Mucosa of descending colon (tissue), 3 donors: ENCODE measurements at regions of chr5 and their contacts with region 1.

Region 1: DNA sequence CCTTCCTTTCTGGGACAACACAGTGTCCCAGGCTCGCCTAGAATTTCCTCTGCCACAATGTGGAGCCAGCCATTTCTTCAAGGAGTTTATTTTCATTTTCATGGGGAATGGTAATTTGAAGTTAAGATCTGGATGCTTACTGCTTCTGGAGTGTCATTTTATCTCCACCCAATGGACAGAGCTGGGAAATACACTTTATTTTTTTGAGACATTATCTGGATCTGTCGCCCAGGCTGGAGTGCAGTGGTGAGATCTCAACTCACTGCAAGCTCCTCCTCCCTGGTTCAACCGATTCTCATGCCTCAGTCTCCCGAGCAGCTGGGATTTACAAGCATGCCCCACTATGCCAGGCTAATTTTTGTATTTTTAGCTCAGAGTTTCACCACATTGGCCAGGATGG is 12.7 kb upstream of the THG1L start:
- DNase-seq: peak in 2 of 3 donors; percentile 36 to 47
- ATAC-seq: peak; percentile 95
- H3K4me3 ChIP-seq: no peak overlapping the region
- H3K4me1 ChIP-seq: peaks cover 14% of the 10 kb centered on the region
- CTCF ChIP-seq: peak; percentile 42

Region 2: DNA sequence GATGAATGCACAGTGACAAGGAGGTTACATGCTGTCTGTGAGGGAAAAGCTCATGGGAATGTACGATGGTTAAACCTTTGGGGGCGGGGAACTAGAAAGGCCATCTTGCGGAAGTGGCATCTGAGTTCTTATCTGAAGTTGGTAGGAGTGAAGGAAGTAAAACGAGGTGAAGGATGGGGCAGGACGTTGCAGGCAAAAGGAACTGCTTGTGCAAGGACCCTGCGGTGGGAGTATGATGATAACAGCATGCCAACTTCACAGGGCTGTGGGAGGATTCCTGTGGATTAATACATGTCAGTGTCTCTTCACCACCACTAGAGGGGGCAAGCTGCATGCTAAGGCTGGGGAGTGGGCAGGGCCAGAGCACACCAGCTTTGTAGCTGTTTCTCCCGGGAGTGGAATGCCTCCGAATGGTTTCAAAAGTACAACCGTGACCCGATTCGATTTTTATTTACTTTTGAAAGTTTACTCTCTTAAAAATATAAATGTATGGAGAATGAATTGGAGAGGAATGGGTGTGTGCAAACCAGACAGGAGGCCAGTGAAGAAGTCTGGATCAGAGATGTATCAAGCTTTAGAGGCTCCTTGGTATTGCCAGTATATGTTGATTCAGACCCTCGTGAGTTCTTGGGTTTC is 390.1 kb before region 1 on chr5:
- intact Hi-C with region 1: loop called in 1 of 2 experiments (anchors 10 kb)
- DNase-seq: peak in 2 of 3 donors; percentile 51 to 59
- ATAC-seq: peak; percentile 97
- H3K4me3 ChIP-seq: no peak overlapping the region
- H3K4me1 ChIP-seq: no peaks in the 10 kb centered on the region
- CTCF ChIP-seq: peak; percentile 78

Region 3: DNA sequence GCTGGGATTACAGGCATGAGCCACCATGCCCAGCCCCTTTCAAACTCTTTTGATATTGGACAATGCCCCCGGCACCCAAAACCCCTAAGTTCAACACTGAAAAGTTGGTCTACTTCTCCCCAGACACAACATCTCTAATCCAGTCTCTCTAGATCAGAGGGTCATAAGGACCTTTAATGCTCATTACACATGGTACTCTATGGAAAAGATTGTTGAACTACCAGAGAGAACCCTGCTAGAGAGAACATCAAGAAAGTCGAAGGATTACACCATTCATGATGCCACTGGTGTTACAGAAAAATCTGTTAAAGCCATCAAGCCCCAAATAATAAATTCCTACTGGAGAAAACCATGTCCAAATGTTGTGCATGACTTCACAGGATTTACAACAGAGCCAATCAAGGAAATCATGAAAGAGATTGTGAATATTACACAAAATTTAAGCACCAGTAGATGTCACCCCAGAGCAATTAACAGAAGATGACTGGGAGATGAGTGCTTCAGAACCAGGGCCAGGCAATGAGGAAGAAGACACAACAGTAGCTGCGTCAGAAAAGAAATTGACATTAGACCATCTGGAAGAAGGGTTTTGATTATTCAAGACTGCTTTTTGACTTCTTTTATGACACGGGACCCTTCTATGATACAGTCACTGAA is 286.8 kb before region 1 on chr5:
- intact Hi-C with region 1: loop called in 1 of 2 experiments (anchors 10 kb)
- DNase-seq: peak in 1 of 3 donors; percentile 69
- ATAC-seq: peak; percentile 88
- H3K4me3 ChIP-seq: no peak overlapping the region
- H3K4me1 ChIP-seq: no peaks in the 10 kb centered on the region
- CTCF ChIP-seq: no peak

Region 4: GRCh38 chr5:157486221-157486681 is 232.3 kb before region 1 on chr5:
- intact Hi-C with region 1: loop called in 1 of 2 experiments (anchors 10 kb)
- DNase-seq: peak in 1 of 3 donors; percentile 70
- ATAC-seq: peak; percentile 66
- H3K4me3 ChIP-seq: no peak overlapping the region
- H3K4me1 ChIP-seq: peaks cover 3% of the 10 kb centered on the region
- CTCF ChIP-seq: no peak

Region 5: GRCh38 chr5:157651623-157652549 is 66.6 kb before region 1 on chr5 and contains the start of gene SOX30:
- intact Hi-C with region 1: loop called in 1 of 2 experiments (anchors 10 kb)
- DNase-seq: peak; percentile 86 to 93 (median 92)
- ATAC-seq: peak; percentile 100
- H3K4me3 ChIP-seq: peak within 1 kb of the TSS; percentile 20
- H3K4me1 ChIP-seq: peaks cover 3% of the 10 kb centered on the region
- CTCF ChIP-seq: peak; percentile 42
- total RNA-seq, gene SOX30: 0.22 to 0.29 (median 0.29) TPM